Natural killer cell (primary cell): ENCODE measurements at regions of chr2 and their contacts with region 1.

Region 1: GRCh38 chr2:106542811-106543259 is 55.7 kb downstream of the CD8B2 start:
- DNase-seq: peak; percentile 67 to 83
- ATAC-seq: peak; percentile 85 to 99 (median 97)
- H3K4me3 ChIP-seq: no peak overlapping the region
- H3K4me3 Mint-ChIP-seq: no peak overlapping the region
- H3K27ac ChIP-seq: no peak overlapping the region
- H3K27ac Mint-ChIP-seq: no peak overlapping the region
- H3K4me1 ChIP-seq: peaks cover 11% of the 10 kb centered on the region
- H3K4me1 Mint-ChIP-seq: peaks cover 0 to 5% of the 10 kb centered on the region in 2 donors
- H3K27me3 ChIP-seq: peaks cover 6% of the 10 kb centered on the region
- H3K27me3 Mint-ChIP-seq: peaks cover 20 to 36% of the 10 kb centered on the region in 2 donors
- CTCF ChIP-seq: peak; percentile 98

Region 2: DNA sequence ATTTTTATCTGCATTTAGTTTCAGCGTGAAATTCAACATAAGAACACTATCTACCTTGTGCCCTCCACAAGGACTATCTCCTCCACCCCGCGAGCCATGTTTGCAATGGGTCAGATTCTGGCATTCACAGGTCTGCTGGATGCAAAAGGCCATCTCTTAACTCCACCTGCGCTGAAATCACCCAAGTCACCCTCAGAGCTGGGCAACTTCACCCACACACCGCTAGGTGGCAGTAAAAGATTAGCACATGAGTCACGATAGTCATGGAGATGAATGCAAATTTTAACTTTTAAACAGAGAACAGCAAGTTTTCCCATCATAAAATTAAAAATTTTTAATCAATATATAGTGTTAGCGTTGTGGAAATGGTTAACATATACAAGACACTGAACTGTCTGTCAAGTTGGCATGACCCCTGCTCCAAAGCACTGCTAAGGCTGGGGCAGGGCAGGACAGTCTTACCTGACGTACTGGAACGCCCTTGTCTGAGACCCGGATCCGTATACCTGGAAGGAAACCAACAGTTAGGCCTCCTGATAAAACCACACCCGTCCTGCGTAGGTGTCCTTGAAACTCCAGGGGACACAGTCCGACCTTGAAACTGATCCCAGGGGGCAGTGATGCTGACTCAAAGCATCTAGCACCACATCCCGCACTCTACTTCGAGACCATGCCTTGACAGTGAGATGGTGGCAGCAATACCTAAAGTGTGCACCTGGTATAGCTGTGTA is 438.3 kb before region 1 on chr2:
- intact Hi-C with region 1: loop called (anchors 1 kb)
- DNase-seq: peak; percentile 47 to 86
- ATAC-seq: peak; percentile 75 to 94 (median 87)
- H3K4me3 ChIP-seq: no peak overlapping the region
- H3K4me3 Mint-ChIP-seq: no peak overlapping the region
- H3K27ac ChIP-seq: no peak overlapping the region
- H3K27ac Mint-ChIP-seq: no peak overlapping the region
- H3K4me1 ChIP-seq: no peaks in the 10 kb centered on the region
- H3K4me1 Mint-ChIP-seq: no peaks in the 10 kb centered on the region
- H3K27me3 ChIP-seq: no peaks in the 10 kb centered on the region
- H3K27me3 Mint-ChIP-seq: no peaks in the 10 kb centered on the region
- CTCF ChIP-seq: peak; percentile 98